ENCODE measurements at regions of chr3 and their contacts with region 1.

Region 1: GRCh38 chr3:134473868-134474546 is 11.8 kb downstream of the ANAPC13 start:
- DNase-seq: peak; percentile 78 to 83 (median 82)
- ATAC-seq: peak; percentile 81
- H3K4me3 ChIP-seq: no peak overlapping the region
- H3K27ac ChIP-seq: peak overlapping the region in 2 of 4 donors; percentile 34 to 45
- H3K4me1 ChIP-seq: peaks cover 20% of the 10 kb centered on the region
- H3K27me3 ChIP-seq: no peaks in the 10 kb centered on the region
- CTCF ChIP-seq: peak; percentile 42 to 90 (median 80)
- POLR2A ChIP-seq: no peak

Region 2: DNA sequence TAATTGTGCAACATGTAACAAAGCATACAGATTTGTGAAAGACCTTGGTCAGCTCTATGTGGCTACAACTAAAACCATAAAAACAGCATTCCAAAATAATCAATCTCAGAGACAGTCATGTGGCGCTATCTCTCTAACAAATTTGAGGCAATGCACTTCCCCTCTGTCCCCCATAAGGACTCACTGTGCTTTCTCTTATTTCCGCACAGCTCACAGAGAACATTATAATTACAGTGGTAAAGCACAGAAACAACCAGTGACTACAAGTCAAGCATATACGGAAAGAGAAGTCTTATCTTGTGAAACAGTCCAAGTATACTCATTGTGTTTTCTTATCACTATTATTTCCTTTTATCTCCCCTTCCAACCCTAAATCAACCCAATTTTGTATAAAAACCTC is 287.6 kb before region 1 on chr3:
- intact Hi-C with region 1: no loop called
- DNase-seq: no peak
- ATAC-seq: no peak
- H3K4me3 ChIP-seq: no peak overlapping the region
- H3K27ac ChIP-seq: no peak overlapping the region
- H3K4me1 ChIP-seq: no peaks in the 10 kb centered on the region
- H3K27me3 ChIP-seq: no peaks in the 10 kb centered on the region
- CTCF ChIP-seq: no peak
- POLR2A ChIP-seq: no peak

Region 3: GRCh38 chr3:134212906-134213665 is 260.9 kb before region 1 on chr3:
- intact Hi-C with region 1: loop called (anchors 10 kb)
- DNase-seq: peak; percentile 80 to 90 (median 84)
- ATAC-seq: peak; percentile 84
- H3K4me3 ChIP-seq: no peak overlapping the region
- H3K27ac ChIP-seq: no peak overlapping the region
- H3K4me1 ChIP-seq: no peaks in the 10 kb centered on the region
- H3K27me3 ChIP-seq: no peaks in the 10 kb centered on the region
- CTCF ChIP-seq: peak; percentile 82 to 96 (median 87)
- POLR2A ChIP-seq: no peak

Region 4: GRCh38 chr3:134378384-134378783 is 95.6 kb before region 1 on chr3:
- intact Hi-C with region 1: loop called (anchors 5 kb)
- DNase-seq: peak; percentile 51 to 69 (median 55)
- ATAC-seq: no peak
- H3K4me3 ChIP-seq: no peak overlapping the region
- H3K27ac ChIP-seq: no peak overlapping the region
- H3K4me1 ChIP-seq: peaks cover 37% of the 10 kb centered on the region
- H3K27me3 ChIP-seq: no peaks in the 10 kb centered on the region
- CTCF ChIP-seq: peak; percentile 43 to 69 (median 59)
- POLR2A ChIP-seq: no peak